ENCODE measurements at regions of chr16 and their contacts with region 1.

Region 1: DNA sequence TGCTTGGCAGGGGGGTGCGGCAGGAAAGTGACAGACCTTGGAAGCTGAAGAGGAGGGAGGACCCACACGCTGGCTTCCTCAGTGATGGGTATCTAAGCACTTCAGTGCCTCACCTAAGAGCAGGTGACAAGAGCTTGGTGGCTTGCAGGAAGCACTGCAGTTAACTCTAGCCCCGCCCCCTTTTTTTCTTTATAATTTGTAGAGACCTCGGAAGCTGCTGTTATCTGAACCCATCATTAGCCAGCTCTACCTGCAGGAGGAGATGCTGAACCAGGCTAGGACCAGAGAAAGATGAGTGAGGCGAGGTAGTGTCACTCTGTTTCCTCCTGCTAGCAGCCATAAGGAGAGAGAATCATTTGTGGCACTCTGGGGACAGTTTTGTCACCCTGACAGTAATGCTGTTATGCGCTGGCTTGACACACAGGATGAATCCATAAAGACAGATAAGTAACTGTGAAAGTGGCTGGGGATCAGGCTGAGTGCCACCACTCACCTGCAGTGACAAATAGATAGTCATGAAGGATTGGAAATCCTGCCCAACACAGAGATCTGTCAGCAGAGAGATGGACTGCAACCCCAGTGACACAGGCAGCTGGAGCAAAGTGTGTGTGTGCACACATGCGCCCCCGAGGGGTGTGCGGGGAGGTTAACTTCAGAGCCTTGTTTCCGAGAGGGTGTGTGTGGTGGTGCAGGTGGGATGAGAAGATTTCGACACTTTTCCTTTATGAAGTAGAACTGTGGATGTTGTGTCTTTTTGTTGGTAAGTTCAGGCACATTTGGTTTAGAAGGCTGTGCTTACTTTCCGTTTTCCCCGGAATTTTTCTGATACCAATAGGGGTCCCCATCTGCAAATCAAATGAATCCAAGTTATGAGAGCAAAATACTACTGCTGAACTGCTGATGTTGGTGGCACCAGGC is 224.0 kb downstream of the IRX3 start:
- DNase-seq: no peak
- ATAC-seq: peak in 1 of 4 donors; percentile 39
- H3K4me3 ChIP-seq: peak overlapping the region in 5 of 12 donors; percentile 1 to 30 (median 10)
- H3K27ac ChIP-seq: no peak overlapping the region
- H3K4me1 ChIP-seq: peaks cover 0 to 22% (median 4%) of the 10 kb centered on the region in 12 donors
- H3K27me3 ChIP-seq: no peaks in the 10 kb centered on the region
- CTCF ChIP-seq: peak in 3 of 12 donors; percentile 16 to 22 (median 18)
- POLR2A ChIP-seq: no peak

Region 2: DNA sequence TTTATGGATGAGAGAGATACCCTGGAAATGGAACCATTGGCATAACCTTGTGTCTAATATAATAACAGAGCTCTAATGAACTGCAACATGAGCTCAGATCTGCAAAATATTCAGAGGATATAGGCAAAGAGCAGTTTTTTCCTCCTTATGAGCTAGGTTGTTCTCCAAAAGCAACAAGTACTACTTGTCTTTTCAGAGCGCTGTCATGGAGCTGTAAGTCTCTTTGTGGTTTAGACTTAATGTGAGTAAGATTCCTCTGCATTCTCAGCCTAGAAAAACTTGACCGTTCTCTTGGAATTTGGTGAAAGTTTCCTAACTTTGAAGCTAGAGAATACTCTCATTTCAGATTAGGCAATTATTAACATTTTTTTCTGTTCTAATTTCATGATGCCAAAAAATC is 273.5 kb before region 1 on chr16:
- intact Hi-C with region 1: loop called in 1 of 10 experiments (anchors 10 kb)
- DNase-seq: no peak
- ATAC-seq: no peak
- H3K4me3 ChIP-seq: no peak overlapping the region
- H3K27ac ChIP-seq: no peak overlapping the region
- H3K4me1 ChIP-seq: peaks cover 0 to 19% (median 0%) of the 10 kb centered on the region in 12 donors
- H3K27me3 ChIP-seq: no peaks in the 10 kb centered on the region
- CTCF ChIP-seq: no peak
- POLR2A ChIP-seq: no peak

Region 3: DNA sequence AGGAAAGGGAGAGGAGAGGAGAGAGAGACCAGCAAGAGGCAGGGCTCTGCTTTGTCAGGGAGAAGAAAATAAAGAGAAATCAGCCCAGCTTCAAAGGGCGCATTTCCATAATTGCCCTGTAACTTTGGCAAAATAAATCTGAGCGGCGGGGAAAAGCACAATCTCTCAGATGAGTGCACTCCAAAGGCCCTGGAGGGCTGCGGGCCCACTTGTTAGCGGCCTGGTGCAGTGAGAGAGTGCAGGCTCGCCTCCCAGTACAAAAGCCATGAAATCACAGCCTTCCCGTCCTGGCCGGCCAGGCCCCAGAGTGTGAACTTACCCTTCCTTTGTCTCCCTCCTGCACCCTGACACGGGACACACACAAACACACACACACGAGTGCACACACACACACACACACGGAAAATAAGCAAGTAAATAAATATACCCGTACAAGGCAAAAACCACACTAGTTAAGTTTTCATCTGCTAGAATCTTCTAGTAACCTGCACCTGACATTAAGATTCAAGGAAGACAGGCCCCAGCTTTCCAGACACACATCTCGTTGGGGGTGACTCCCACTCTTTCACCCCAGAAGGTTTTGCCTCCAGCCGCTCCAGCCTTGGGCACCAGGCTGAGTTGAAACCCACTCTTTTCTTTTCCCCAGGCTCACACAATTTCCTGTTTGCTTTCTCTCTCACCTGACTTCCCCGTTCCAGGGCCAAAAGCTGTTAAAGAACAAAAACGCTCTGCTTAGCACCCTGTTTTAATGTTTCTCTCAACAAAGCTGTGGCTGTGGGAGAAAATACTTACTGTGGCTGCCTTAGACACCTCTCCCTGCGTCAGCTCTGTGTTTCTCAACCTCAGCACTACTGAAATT is 215.5 kb after region 1 on chr16:
- intact Hi-C with region 1: loop called in 1 of 10 experiments (anchors 10 kb)
- DNase-seq: no peak
- ATAC-seq: no peak
- H3K4me3 ChIP-seq: no peak overlapping the region
- H3K27ac ChIP-seq: no peak overlapping the region
- H3K4me1 ChIP-seq: peaks cover 0 to 10% (median 5%) of the 10 kb centered on the region in 12 donors
- H3K27me3 ChIP-seq: peaks cover 0 to 30% (median 0%) of the 10 kb centered on the region in 9 donors
- CTCF ChIP-seq: no peak
- POLR2A ChIP-seq: no peak

Measured in heart left ventricle (tissue), 16 donors.